ENCODE measurements at regions of chr2 and their contacts with region 1.

Region 1: GRCh38 chr2:56754066-56754615 is 570.4 kb downstream of the CCDC85A start:
- DNase-seq: peak in 1 of 4 donors; percentile 6
- ATAC-seq: no peak
- H3K4me3 ChIP-seq: no peak overlapping the region
- H3K27ac ChIP-seq: no peak overlapping the region
- H3K4me1 ChIP-seq: no peaks in the 10 kb centered on the region
- H3K27me3 ChIP-seq: no peaks in the 10 kb centered on the region
- CTCF ChIP-seq: no peak
- POLR2A ChIP-seq: no peak

Region 2: DNA sequence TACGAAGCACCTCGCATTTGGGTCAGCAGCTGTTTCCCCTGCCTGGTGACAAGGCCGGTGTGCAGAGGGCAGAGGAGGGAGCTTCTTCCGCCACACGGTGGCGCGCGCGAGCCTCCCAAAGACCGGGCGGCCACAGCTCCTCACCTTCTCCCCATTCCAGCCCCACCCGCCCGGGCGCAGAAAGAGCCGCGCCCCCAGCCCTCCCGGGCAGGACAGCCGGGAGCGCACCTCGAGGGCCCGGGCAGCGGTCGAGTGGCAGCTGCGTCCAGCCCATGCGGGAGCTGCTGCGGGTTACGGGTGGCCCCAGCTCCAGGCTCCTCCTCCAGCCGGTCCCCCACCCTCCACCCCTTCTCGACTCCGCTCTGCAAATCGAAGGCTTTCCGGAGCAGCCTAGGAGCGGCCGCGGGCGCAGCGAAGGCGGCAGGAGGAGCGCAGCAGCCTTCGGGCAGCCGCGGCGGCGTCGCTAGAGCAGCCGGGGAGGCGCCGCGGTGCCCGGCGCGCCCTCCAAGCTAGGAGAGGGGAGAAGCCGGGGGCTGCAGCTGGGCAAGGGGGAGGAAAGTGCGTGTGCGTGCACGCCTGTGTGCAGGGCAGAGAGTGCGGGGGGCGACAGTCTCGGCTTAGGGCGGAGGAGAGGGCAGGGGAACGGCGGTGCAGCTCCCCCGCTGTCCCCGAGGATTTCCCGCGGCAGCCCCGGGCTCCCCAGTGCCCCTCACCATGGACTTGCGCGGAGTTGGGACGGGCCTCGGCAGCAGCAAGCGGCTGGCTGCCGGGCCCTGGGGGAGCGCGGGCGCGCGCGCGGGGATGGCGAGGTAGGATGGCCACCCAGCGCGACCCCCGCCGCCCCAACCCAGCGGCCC is 570.3 kb before region 1 on chr2 and contains the start of gene CCDC85A:
- intact Hi-C with region 1: loop called (anchors 5 kb)
- DNase-seq: peak; percentile 86 to 91 (median 88)
- ATAC-seq: peak; percentile 95
- H3K4me3 ChIP-seq: peak within 1 kb of the TSS; percentile 20 to 60
- H3K27ac ChIP-seq: no peak within 1 kb of the TSS
- H3K4me1 ChIP-seq: peaks cover 20% of the 10 kb centered on the region
- H3K27me3 ChIP-seq: peaks cover 0 to 5% of the 10 kb centered on the region in 2 donors
- CTCF ChIP-seq: peak; percentile 90 to 99 (median 94)
- POLR2A ChIP-seq: no peak
- total RNA-seq, gene CCDC85A: 2.3 to 2.6 TPM

Region 3: GRCh38 chr2:56985609-56986008 is 231.5 kb after region 1 on chr2:
- intact Hi-C with region 1: no loop called
- DNase-seq: no peak
- ATAC-seq: no peak
- H3K4me3 ChIP-seq: no peak overlapping the region
- H3K27ac ChIP-seq: no peak overlapping the region
- H3K4me1 ChIP-seq: no peaks in the 10 kb centered on the region
- H3K27me3 ChIP-seq: no peaks in the 10 kb centered on the region
- CTCF ChIP-seq: peak in 1 of 7 experiments; percentile 9
- POLR2A ChIP-seq: no peak